ENCODE measurements at regions of chr1 and their contacts with region 1.

Region 1: DNA sequence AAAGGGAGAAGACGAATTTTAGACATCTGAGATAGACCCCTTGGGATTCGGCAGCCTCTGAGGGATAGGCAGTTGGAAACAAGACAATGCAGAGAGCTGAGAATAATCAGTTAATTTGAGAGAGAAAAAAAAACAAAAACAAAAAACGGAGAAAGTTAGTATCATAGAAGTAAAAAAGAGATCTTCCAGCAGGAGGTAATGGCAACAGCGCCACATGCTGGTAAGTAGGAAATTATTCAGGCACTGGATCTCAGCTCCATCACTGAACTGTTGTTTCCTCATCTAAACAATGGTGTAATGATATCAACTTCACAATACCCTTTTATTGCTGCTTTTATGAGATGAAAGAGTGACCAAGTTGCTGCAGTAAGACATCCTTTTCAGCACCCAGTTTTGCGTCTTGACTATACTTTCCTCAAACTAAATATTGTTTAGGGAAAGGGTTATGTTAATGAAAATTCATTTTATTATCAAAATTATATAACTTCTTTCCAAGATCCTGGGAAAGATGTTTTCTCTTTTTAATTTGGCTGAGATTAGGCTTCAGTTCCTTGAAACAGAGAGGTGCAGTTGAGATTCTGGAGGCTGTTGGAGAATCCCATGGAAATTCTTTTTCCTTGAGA is 91.4 kb upstream of the KCNA3 start:
- DNase-seq: peak; percentile 80
- ATAC-seq: peak; percentile 82
- H3K4me3 Mint-ChIP-seq: peak overlapping the region; percentile 29
- H3K27ac Mint-ChIP-seq: no peak overlapping the region
- H3K4me1 Mint-ChIP-seq: peaks cover 9% of the 10 kb centered on the region
- H3K27me3 Mint-ChIP-seq: peaks cover 36% of the 10 kb centered on the region

Region 2: DNA sequence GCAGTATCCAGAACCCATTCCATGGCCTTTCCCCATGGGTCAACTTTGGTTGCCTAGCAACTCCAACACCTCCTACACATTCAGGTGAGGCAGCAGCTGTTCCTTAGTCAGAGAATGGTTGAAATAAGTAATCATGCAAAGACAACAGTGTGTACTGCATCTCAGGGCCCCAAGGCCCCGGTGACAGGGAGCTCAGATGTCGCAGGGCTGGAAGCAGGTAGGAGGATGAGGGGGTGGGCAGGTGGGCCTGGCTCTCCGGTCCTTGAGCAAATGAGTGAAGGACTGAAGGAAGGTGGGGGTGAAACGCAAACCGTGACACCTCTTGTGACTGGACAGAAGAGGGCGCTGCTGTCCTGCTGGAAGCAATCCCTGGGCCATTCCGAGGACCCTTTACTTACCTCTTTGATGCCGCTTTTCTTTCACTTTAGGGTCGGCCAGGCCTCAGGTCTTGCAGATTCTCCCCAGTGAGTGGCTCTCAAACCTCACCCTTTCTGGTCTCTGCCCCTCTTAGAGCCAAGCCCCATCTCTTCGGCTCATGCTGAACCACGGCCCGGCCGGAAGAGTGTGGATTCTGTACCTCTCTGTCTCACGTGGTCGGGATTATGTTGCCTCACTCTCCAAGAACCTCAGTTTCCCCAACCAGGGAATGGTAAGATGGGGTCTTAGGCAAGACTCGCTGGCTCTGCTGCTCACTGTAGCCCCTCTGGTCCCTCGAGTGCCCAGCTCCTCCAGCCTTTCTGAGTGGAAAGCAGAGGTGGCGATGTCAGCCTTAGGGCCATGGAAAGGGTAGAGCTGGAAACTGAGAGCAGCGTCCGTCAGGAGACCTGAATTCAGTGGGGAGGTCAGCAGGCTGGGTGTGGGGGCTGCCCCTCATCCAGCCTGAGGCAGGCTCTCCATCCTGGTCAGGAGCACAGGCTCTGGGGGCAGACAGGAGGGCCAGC is 241.6 kb before region 1 on chr1:
- CTCF ChIA-PET with region 1: interaction called, 33 read pairs
- POLR2A ChIA-PET with region 1: no interaction called
- DNase-seq: peak; percentile 73
- ATAC-seq: peak; percentile 77
- H3K4me3 Mint-ChIP-seq: no peak overlapping the region
- H3K27ac Mint-ChIP-seq: no peak overlapping the region
- H3K4me1 Mint-ChIP-seq: peaks cover 1% of the 10 kb centered on the region
- H3K27me3 Mint-ChIP-seq: peaks cover 38% of the 10 kb centered on the region

Region 3: DNA sequence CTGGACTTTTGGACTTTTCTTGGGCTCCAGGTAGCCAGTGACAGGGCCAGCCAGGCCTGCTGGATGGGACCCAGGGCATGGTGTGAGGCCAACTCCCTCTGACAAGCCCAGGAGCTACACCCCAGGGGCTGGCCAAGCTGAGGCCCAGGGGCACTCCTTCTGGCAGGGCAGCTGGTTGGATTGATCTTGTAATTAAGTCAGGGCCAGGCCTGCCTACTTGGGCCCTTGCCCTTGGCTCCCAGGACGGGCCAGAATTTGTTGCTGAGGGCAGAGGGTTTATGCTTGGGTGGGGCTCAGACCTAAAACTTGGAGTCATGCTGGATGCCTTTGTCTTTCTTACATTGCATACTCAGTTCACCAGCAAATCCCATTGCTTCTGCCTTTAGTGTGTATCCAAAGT is 180.7 kb before region 1 on chr1:
- CTCF ChIA-PET with region 1: no interaction called
- POLR2A ChIA-PET with region 1: no interaction called
- DNase-seq: no peak
- ATAC-seq: no peak
- H3K4me3 Mint-ChIP-seq: no peak overlapping the region
- H3K27ac Mint-ChIP-seq: no peak overlapping the region
- H3K4me1 Mint-ChIP-seq: no peaks in the 10 kb centered on the region
- H3K27me3 Mint-ChIP-seq: peaks cover 5% of the 10 kb centered on the region

Region 4: GRCh38 chr1:110630839-110631663 is 135.1 kb before region 1 on chr1:
- CTCF ChIA-PET with region 1: interaction called, 77 read pairs
- POLR2A ChIA-PET with region 1: interaction called, 4 read pairs
- DNase-seq: peak; percentile 94
- ATAC-seq: peak; percentile 84
- H3K4me3 Mint-ChIP-seq: no peak overlapping the region
- H3K27ac Mint-ChIP-seq: no peak overlapping the region
- H3K4me1 Mint-ChIP-seq: peaks cover 32% of the 10 kb centered on the region
- H3K27me3 Mint-ChIP-seq: no peaks in the 10 kb centered on the region

Region 5: DNA sequence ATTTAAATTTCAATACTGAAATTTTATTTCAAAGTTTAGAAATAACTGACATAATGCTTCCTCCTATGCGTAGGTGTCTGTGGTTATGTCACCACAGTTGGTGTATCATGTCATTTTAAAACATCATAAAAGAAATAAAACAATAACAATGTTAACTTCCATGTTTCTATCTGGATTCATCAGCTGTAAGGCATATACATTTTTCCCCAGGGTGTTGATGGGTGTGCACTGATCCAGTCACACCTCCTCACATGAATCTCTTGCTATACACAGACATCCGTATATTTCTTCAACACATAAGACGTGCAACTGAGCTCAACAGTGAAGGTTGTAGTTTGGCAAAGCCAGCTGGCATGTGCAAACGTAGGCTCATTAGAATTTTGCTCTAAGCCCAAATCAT is 97.6 kb before region 1 on chr1:
- CTCF ChIA-PET with region 1: interaction called, 56 read pairs
- POLR2A ChIA-PET with region 1: interaction called, 13 read pairs
- DNase-seq: no peak
- ATAC-seq: peak; percentile 21
- H3K4me3 Mint-ChIP-seq: peak overlapping the region; percentile 66
- H3K27ac Mint-ChIP-seq: peak overlapping the region; percentile 78
- H3K4me1 Mint-ChIP-seq: peaks cover 35% of the 10 kb centered on the region
- H3K27me3 Mint-ChIP-seq: no peaks in the 10 kb centered on the region

Region 6: GRCh38 chr1:110746579-110747160 is 19.5 kb before region 1 on chr1:
- CTCF ChIA-PET with region 1: interaction called, 18 read pairs
- POLR2A ChIA-PET with region 1: no interaction called
- DNase-seq: peak; percentile 82
- ATAC-seq: peak; percentile 61
- H3K4me3 Mint-ChIP-seq: no peak overlapping the region
- H3K27ac Mint-ChIP-seq: no peak overlapping the region
- H3K4me1 Mint-ChIP-seq: no peaks in the 10 kb centered on the region
- H3K27me3 Mint-ChIP-seq: peaks cover 31% of the 10 kb centered on the region

Region 7: GRCh38 chr1:110798691-110799256 is 32.6 kb after region 1 on chr1:
- CTCF ChIA-PET with region 1: no interaction called
- POLR2A ChIA-PET with region 1: no interaction called
- DNase-seq: no peak
- ATAC-seq: no peak
- H3K4me3 Mint-ChIP-seq: no peak overlapping the region
- H3K27ac Mint-ChIP-seq: no peak overlapping the region
- H3K4me1 Mint-ChIP-seq: peaks cover under 1% of the 10 kb centered on the region
- H3K27me3 Mint-ChIP-seq: peaks cover 2% of the 10 kb centered on the region

Region 8: GRCh38 chr1:110986407-110986891 is 220.3 kb after region 1 on chr1:
- CTCF ChIA-PET with region 1: interaction called, 14 read pairs
- POLR2A ChIA-PET with region 1: no interaction called
- DNase-seq: no peak
- ATAC-seq: no peak
- H3K4me3 Mint-ChIP-seq: no peak overlapping the region
- H3K27ac Mint-ChIP-seq: no peak overlapping the region
- H3K4me1 Mint-ChIP-seq: peaks cover 15% of the 10 kb centered on the region
- H3K27me3 Mint-ChIP-seq: peaks cover 9% of the 10 kb centered on the region